ENCODE measurements at regions of chr2 and their contacts with region 1.

Region 1: DNA sequence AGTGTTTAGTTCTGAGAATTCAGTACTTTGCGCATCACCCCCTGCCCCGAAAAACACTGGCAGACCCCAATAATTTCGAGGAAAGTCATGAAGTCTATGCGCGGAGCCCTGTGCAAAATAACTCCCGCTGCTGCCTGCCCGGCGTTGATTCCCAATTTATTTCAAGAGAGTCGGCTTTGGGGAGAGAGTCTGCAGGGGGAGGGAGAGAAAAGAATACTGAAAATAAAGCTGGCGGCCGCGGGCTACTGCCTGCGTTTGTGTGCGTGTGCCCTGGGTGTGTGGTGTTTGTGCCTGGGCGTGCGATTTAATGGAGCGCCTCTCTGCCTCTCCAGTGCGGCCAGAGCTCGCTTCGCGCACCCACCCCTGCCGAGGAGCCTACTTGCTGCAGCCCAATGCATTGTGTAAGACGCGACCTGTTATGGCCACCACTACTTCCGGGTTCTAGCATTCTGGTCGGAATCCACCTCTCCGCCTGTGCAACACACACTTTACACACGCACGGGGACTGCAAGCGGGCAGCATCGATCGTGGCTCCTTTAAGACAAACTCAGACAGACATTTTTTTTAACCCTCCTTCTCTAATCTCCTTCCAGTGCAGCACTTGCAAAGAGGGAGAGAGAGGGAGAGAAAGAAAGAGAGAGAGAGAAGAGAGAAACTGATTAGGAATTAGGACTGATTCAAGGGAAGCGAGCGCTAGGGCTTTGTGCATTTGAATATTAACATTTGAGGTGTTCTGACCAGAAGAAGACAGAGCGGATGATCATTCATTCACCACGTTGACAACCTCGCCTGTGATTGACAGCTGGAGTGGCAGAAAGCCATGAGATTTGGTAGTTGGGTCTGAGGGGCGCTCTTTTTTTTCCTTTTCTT is at the start of gene MEIS1:
- DNase-seq: peak; percentile 89
- H3K4me3 Mint-ChIP-seq: peak within 1 kb of the TSS; percentile 74
- H3K27ac Mint-ChIP-seq: peak within 1 kb of the TSS; percentile 75
- H3K4me1 Mint-ChIP-seq: peaks cover 19% of the 10 kb centered on the region
- H3K27me3 Mint-ChIP-seq: no peaks in the 10 kb centered on the region
- CTCF ChIP-seq: no peak
- total RNA-seq, gene MEIS1: 8.1 and 11.5 TPM in 2 replicates

Region 2: GRCh38 chr2:66198873-66199272 is 236.0 kb before region 1 on chr2:
- CTCF ChIA-PET with region 1: no interaction called
- intact Hi-C with region 1: no loop called
- DNase-seq: no peak
- H3K4me3 Mint-ChIP-seq: no peak overlapping the region
- H3K27ac Mint-ChIP-seq: no peak overlapping the region
- H3K4me1 Mint-ChIP-seq: no peaks in the 10 kb centered on the region
- H3K27me3 Mint-ChIP-seq: no peaks in the 10 kb centered on the region
- CTCF ChIP-seq: no peak

Region 3: DNA sequence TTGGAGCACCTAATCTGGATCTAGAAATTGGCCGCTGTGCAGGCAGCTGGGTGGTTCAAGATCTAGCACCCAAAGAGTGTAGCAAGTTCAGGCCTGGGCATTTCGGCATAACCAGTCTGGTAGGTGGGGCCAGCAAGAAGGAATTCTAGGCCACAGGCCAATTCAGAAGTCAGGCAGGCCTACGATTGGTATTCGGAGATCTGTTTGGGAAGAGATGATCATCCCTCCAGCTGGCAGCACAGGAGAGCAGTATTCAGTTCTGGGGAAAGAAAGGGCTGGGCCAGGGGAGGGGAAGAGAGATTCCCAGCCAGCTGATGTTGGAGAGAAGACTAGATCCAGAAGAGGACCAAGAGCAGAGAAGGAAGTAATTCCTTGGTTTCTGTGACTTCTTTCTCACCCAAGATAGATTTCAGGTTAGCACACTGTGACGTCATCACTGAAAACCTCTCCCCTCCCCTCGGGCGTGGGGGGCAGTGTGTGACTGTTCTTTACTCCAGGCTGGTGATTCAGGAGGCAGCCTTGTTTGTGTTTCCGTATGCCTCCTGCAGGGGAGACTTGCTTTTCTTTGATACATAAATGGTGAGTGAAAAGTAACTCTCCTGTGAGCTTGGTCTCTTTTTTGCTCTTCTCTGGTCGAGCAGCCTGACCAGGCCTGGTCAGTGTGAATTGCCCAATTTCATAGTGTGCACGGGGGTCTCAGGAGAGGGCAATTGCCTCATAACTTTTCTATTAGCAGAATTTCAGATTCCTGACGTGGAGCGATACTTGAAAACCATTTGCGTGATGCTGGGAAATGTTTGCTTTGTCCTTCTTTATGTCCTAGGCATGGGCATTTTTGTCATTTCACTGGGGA is 61.1 kb after region 1 on chr2:
- CTCF ChIA-PET with region 1: no interaction called
- intact Hi-C with region 1: loop called (anchors 5 kb)
- DNase-seq: peak; percentile 71
- H3K4me3 Mint-ChIP-seq: no peak overlapping the region
- H3K27ac Mint-ChIP-seq: peak overlapping the region; percentile 50
- H3K4me1 Mint-ChIP-seq: peaks cover 24% of the 10 kb centered on the region
- H3K27me3 Mint-ChIP-seq: no peaks in the 10 kb centered on the region
- CTCF ChIP-seq: no peak

Region 4: DNA sequence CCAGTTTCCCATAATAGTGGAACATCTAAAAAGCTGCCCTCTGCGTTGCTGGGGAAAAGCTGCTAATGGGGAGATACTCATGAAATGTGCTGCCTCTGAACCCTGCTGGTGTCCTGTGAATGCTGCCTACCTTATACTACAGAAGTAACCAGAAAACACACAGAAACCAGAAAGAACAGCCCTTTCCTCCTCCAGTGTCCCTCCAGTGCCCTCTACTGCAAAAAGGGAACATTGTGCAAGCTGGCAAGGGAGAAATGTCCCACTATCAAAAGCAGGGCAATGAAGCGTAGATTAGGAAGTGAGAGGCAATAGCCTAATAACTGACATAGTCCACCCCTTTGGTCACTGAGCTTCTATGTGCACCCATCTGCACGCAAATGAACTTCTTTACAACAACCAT is 799.5 kb after region 1 on chr2:
- CTCF ChIA-PET with region 1: no interaction called
- intact Hi-C with region 1: loop called (anchors 5 kb)
- DNase-seq: peak; percentile 22
- H3K4me3 Mint-ChIP-seq: no peak overlapping the region
- H3K27ac Mint-ChIP-seq: no peak overlapping the region
- H3K4me1 Mint-ChIP-seq: peaks cover 33% of the 10 kb centered on the region
- H3K27me3 Mint-ChIP-seq: no peaks in the 10 kb centered on the region
- CTCF ChIP-seq: peak; percentile 28

Region 5: GRCh38 chr2:67397143-67397986 is 962.5 kb after region 1 on chr2 and contains the start of gene ETAA1:
- CTCF ChIA-PET with region 1: no interaction called
- intact Hi-C with region 1: loop called (anchors 5 kb)
- DNase-seq: peak; percentile 93
- H3K4me3 Mint-ChIP-seq: peak within 1 kb of the TSS; percentile 88
- H3K27ac Mint-ChIP-seq: peak within 1 kb of the TSS; percentile 90
- H3K4me1 Mint-ChIP-seq: peaks cover 36% of the 10 kb centered on the region
- H3K27me3 Mint-ChIP-seq: no peaks in the 10 kb centered on the region
- CTCF ChIP-seq: no peak
- total RNA-seq, gene ETAA1: 12.2 and 12.6 TPM in 2 replicates

Region 6: GRCh38 chr2:67846370-67847070 is 1411.6 kb after region 1 on chr2:
- CTCF ChIA-PET with region 1: no interaction called
- intact Hi-C with region 1: loop called (anchors 5 kb)
- DNase-seq: peak; percentile 88
- H3K4me3 Mint-ChIP-seq: peak overlapping the region; percentile 14
- H3K27ac Mint-ChIP-seq: peak overlapping the region; percentile 39
- H3K4me1 Mint-ChIP-seq: peaks cover 10% of the 10 kb centered on the region
- H3K27me3 Mint-ChIP-seq: no peaks in the 10 kb centered on the region
- CTCF ChIP-seq: peak; percentile 54

Measured in Calu3 (cell line).